K562 (cell line): ENCODE measurements at regions of chr15 and their contacts with region 1.

Region 1: DNA sequence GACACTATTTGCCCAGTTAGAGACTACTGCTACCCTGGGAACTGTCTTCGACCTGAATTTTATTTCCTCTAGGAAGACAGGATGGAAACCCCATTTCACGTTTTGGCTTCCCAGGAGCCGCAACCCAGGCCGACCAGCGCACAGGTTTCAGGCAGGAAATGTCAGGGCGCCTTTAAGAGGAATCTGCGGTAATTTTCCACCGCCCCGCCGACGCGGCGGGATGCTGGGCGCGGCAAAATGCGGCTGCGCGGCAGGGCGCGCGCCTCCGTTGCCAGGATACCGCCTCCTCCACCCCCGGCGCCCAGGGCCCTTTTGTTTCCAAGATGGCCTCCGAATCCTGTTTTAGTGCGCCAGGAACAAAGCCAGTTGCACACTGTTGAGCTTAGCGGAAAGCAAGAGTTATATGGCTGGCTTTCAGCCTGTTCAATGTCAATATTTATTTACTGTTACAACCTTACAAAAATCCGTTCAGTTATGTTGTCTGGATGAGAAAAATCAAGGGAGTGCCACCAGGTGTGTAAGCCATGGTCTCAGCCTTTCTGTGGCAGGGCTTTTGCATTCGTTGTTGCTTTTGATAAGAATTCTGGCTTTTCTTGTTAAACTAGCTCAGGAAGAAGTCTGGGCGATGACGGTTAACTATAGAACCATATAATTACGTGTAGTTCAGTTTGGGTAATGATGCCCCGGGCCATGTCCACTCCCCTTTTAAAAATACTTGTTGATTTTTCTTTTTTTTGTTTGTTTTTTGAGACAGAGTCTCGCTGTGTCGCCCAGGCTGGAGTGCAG is 79.7 kb upstream of the CHD2 start:
- DNase-seq: peak; percentile 92 to 96 (median 94)
- ATAC-seq: peak; percentile 85
- H3K4me3 ChIP-seq: peak overlapping the region; percentile 25
- H3K27ac ChIP-seq: peak overlapping the region; percentile 80
- H3K4me1 ChIP-seq: peaks cover 24 to 32% of the 10 kb centered on the region in 2 experiments
- H3K27me3 ChIP-seq: no peaks in the 10 kb centered on the region
- CTCF ChIP-seq: no peak
- EP300 ChIP-seq: no peak
- POLR2A ChIP-seq: peak; percentile 79
- RAD21 ChIP-seq: 0 out of 4 replicates have a peak, but pooled peaks of 1 of the 2 experiments have one; percentile 14

Region 2: DNA sequence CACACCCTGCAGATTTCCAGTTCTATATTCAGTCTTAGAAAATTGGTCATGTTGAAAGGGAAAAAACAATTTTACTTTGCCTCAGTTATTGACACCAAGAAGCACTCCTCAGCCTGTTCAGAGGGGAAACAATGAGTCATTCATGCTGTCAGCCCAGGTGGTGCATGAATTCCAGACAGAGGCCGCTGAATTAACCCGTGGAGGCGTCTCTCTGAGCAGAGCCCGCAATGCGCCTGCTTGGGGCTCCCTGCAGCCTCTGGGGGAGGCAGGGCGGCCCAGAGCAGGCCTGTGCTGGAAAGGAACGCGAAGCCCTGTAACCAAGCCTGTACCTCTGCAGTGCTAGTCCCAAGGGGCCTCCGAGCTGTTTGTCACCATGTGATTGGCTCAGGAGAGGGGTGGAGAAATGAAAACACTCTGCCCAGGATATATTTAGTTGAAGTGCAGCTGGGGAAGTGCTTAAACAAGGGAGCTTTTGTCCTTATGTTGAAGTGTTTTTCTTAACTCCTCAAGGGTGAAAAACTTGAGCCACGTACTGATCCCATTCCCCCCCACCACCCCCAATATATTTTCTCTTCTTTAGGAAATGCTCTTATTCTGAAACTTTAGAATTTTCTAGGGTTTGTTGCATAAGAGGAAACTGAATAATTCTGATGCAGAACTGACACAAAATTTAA is 11.4 kb after region 1 on chr15:
- CTCF ChIA-PET with region 1: no interaction called
- POLR2A ChIA-PET with region 1: interaction called, 58 read pairs
- in situ Hi-C with region 1: no loop called
- intact Hi-C with region 1: no loop called
- DNase-seq: peak; percentile 72 to 95 (median 83)
- ATAC-seq: peak; percentile 99
- H3K4me3 ChIP-seq: peak overlapping the region; percentile 2; the same call in 1 of the 2 replicates
- H3K27ac ChIP-seq: peak overlapping the region; percentile 85
- H3K4me1 ChIP-seq: peaks cover 15 to 22% of the 10 kb centered on the region in 2 experiments
- H3K27me3 ChIP-seq: no peaks in the 10 kb centered on the region
- CTCF ChIP-seq: 0 out of 6 replicates have a peak, but pooled peaks of 1 of the 3 experiments have one; percentile 23
- EP300 ChIP-seq: 0 out of 2 replicates have a peak, but pooled peaks have one; percentile 19
- POLR2A ChIP-seq: peak; percentile 75
- RAD21 ChIP-seq: peak in 1 of 2 experiments; percentile 38; a peak in 3 of 4 replicates